Activated CD4-positive, alpha-beta T cell treated with anti-CD3 and anti-CD28 coated beads, Interleukin-2, amount 10 ng/mL, durations not matched to agents 24 days and 14 days (primary cell): ENCODE measurements at regions of chr2 and their contacts with region 1.

Region 1: GRCh38 chr2:224927646-224928173 is 114.6 kb downstream of the DOCK10 start:
- DNase-seq: peak; percentile 91
- H3K4me3 Mint-ChIP-seq: peak overlapping the region; percentile 67
- H3K27ac Mint-ChIP-seq: peak overlapping the region; percentile 100
- H3K4me1 Mint-ChIP-seq: peaks cover 85% of the 10 kb centered on the region
- H3K27me3 Mint-ChIP-seq: no peaks in the 10 kb centered on the region

Region 2: GRCh38 chr2:223944703-223945531 is 982.8 kb before region 1 on chr2 and contains the start of gene WDFY1:
- intact Hi-C with region 1: loop called (anchors 5 kb)
- DNase-seq: peak; percentile 94
- H3K4me3 Mint-ChIP-seq: peak within 1 kb of the TSS; percentile 91
- H3K27ac Mint-ChIP-seq: peak within 1 kb of the TSS; percentile 94
- H3K4me1 Mint-ChIP-seq: peaks cover 54% of the 10 kb centered on the region
- H3K27me3 Mint-ChIP-seq: no peaks in the 10 kb centered on the region
- total RNA-seq, gene WDFY1: 25.3 and 27.8 TPM in 2 replicates

Region 3: DNA sequence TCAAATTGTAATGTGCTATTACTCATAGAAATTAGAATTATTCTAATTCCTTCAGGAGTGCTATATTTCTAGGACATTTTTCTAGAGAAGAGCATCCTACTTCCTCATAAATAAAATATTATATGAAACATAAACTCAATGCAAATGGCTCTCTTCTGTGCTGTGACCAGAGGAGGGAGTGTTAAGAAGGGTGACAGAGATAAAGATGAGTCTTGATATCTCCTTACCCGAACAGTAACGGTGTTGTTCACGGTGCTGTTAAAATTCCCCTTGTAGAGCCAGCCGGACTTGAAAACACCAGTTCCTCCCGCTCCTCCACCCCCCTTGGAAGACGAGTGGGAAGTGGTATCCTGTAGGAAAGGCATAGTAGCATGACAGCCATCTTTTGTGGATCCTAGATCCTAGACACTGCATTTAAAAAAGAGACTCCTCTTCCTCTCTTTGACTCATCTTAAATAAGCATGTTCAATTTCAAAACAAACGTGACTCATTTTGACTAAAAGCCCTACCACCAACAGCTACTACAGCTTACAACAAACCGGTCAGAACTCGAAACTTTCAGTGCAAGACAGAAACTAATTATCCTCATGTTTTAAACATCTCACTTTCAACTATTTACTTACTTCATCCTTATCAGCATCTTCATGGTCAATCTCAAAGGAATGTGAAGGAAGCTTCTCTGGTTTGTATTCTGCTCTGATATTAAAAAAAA is 41.7 kb before region 1 on chr2:
- intact Hi-C with region 1: loop called (anchors 1 kb)
- DNase-seq: no peak
- H3K4me3 Mint-ChIP-seq: no peak overlapping the region
- H3K27ac Mint-ChIP-seq: peak overlapping the region; percentile 87
- H3K4me1 Mint-ChIP-seq: peaks cover 73% of the 10 kb centered on the region
- H3K27me3 Mint-ChIP-seq: no peaks in the 10 kb centered on the region

Region 4: DNA sequence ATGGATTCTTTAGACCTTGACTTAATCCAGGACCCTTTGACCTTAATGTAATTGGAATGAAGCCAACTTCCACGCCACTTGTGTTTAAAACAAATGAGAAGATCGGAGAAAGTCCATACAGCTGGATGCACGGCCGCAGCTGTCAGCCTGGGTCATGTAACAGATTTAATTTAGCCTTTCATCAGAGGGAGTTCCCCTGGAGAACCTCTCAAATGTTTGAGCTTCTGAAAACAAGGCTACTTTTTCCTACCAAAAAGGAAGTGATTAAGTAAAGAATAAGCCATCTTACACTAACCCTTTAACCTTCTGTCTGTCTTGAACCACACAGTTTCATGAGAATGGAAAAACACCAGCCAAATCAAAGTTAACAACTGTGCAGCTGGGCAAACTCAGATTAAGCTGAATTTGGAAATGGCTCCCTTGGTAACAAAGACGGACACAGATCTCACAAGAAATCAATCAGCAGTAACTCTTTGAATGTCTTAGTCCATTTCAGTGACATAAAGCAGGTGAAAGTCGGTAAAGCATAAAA is 11.0 kb after region 1 on chr2:
- intact Hi-C with region 1: loop called (anchors 1 kb)
- DNase-seq: peak; percentile 76
- H3K4me3 Mint-ChIP-seq: peak overlapping the region; percentile 77
- H3K27ac Mint-ChIP-seq: peak overlapping the region; percentile 87
- H3K4me1 Mint-ChIP-seq: peaks cover 61% of the 10 kb centered on the region
- H3K27me3 Mint-ChIP-seq: no peaks in the 10 kb centered on the region

Region 5: GRCh38 chr2:224952936-224953657 is 25.4 kb after region 1 on chr2:
- intact Hi-C with region 1: loop called (anchors 1 kb)
- DNase-seq: peak; percentile 84
- H3K4me3 Mint-ChIP-seq: peak overlapping the region; percentile 66
- H3K27ac Mint-ChIP-seq: peak overlapping the region; percentile 66
- H3K4me1 Mint-ChIP-seq: peaks cover 71% of the 10 kb centered on the region
- H3K27me3 Mint-ChIP-seq: no peaks in the 10 kb centered on the region

Region 6: GRCh38 chr2:225002039-225002655 is 74.4 kb after region 1 on chr2:
- intact Hi-C with region 1: loop called (anchors 1 kb)
- DNase-seq: peak; percentile 89
- H3K4me3 Mint-ChIP-seq: peak overlapping the region; percentile 63
- H3K27ac Mint-ChIP-seq: peak overlapping the region; percentile 73
- H3K4me1 Mint-ChIP-seq: peaks cover 65% of the 10 kb centered on the region
- H3K27me3 Mint-ChIP-seq: no peaks in the 10 kb centered on the region

Region 7: DNA sequence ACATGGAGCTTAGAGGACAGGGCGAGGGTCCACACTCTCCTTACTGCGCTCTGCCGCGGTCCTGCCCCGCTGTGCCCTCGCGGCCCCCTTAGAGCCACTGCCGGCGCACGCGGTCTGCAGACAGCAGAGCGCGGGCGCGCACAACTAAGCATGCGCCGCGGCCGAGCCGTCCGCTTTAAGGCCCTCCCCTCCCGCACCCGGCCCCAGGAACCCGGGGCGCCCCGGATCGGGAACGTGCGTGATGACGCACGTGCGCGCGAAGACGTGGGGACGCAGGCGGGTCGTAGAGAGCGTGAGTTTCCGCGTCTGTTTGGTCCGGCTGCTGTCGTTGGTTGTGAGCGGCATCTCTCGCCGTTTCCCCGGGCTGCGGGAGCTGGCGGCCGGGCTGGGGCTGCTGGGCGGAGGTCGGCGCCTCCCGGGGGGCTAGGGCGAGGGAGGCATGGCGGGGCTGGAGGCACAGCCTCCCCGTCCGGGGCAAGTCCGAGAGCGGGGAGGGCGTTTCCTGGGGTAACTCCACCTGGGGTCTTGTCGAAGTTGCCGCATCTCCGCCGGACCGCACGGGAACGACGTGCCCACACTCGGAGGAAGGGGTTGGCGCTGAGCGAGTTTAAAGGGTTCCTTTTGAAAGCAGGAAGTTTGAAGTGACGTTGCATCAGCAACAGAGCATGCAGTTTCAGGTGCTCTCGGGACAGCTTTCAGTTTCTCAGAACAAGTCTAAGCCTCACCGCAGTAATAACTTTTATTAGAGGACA is 1908.3 kb after region 1 on chr2 and contains the start of gene RHBDD1:
- intact Hi-C with region 1: loop called (anchors 5 kb)
- DNase-seq: peak; percentile 98
- H3K4me3 Mint-ChIP-seq: peak within 1 kb of the TSS; percentile 95
- H3K27ac Mint-ChIP-seq: peak within 1 kb of the TSS; percentile 97
- H3K4me1 Mint-ChIP-seq: peaks cover 54% of the 10 kb centered on the region
- H3K27me3 Mint-ChIP-seq: no peaks in the 10 kb centered on the region
- total RNA-seq, gene RHBDD1: 41.3 and 44.7 TPM in 2 replicates